ENCODE measurements at regions of chr11 and their contacts with region 1.

Region 1: DNA sequence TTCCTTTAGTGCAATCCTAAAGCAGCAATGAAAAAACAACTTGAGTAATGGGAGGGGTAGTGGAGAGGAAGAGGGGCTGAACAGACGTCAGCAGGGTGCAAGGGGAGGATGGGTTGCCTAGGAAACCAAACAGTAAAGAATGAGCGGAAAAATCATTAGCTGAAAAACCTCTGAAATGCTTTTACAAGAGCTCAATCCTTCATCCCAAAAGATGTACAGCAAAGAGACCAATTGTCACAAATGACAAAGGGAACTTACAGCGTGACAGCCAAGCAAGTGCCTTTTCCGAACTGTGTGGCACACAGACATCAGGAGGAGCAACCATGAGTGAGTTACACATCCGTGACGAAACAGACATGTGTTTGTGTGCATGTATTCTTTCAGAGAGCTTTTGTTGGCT is 104.6 kb downstream of the SIK3 start:
- DNase-seq: peak in 1 of 5 donors; percentile 40
- H3K4me3 ChIP-seq: no peak overlapping the region
- H3K27ac ChIP-seq: no peak overlapping the region
- H3K4me1 ChIP-seq: peaks cover 11% of the 10 kb centered on the region
- H3K27me3 ChIP-seq: no peaks in the 10 kb centered on the region
- CTCF ChIP-seq: no peak
- EP300 ChIP-seq: no peak
- POLR2A ChIP-seq: no peak

Region 2: GRCh38 chr11:116595305-116595880 is 398.2 kb before region 1 on chr11:
- intact Hi-C with region 1: no loop called
- DNase-seq: no peak
- H3K4me3 ChIP-seq: no peak overlapping the region
- H3K27ac ChIP-seq: no peak overlapping the region
- H3K4me1 ChIP-seq: peaks cover 9% of the 10 kb centered on the region
- H3K27me3 ChIP-seq: no peaks in the 10 kb centered on the region
- CTCF ChIP-seq: no peak
- EP300 ChIP-seq: no peak
- POLR2A ChIP-seq: no peak

Region 3: DNA sequence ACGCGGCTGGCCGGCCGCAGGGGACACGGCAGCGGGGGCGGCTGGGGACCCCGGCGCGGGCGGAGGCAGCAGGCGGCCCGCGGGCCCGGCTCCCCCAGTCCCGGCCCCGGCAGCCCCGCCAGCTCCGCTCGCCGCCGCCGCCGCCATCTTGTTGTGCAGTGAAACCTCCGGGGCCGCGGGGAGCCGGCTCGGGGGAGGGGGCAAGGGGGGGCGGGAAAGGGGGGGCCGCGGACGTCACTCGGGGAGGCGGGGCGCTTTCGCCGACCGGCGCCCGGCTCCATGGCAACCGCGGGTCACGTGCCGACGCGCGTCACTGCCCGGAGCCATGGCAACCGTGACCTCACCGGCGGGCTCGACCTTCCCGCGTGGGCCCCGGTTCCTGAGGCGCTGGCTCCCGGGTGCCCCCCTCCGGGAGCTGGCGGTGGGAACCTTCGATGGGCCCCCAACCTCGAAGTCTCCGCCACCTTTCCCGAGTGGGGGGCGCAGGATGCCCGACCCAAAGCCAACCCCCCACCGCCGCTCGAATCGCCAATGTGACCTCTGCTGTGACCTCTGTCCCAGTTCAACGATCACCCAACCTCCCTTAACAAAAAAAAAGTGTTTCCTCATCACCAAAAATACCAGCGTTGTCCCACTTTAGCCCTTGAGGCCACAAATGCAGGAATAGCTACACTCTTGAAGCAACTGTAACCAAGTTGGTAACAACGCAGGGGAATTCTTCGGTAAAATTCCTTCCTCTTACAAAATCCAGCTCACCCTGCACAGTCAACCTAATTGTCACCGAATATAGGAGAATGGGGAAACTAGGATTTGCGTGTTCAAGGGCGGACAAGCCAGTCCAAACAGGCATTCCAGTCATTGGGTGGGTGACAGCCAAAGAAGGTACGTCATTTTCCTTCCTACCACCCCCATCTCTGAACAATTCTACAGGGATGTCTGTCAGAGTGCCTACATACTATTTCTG is 105.0 kb after region 1 on chr11 and contains the start of gene SIK3:
- intact Hi-C with region 1: loop called in 1 of 4 experiments (anchors 10 kb)
- DNase-seq: peak; percentile 94 to 98 (median 97)
- H3K4me3 ChIP-seq: peak within 1 kb of the TSS; percentile 81
- H3K27ac ChIP-seq: peak within 1 kb of the TSS; percentile 88 to 98
- H3K4me1 ChIP-seq: peaks cover 17% of the 10 kb centered on the region
- H3K27me3 ChIP-seq: no peaks in the 10 kb centered on the region
- CTCF ChIP-seq: peak in 2 of 3 donors; percentile 58 to 69
- EP300 ChIP-seq: peak; percentile 86
- POLR2A ChIP-seq: peak; percentile 76
- total RNA-seq, gene SIK3: 33.3 to 134 (median 56.2) TPM

Region 4: GRCh38 chr11:117180661-117181585 is 187.3 kb after region 1 on chr11:
- intact Hi-C with region 1: no loop called
- DNase-seq: peak; percentile 72 to 84 (median 81)
- H3K4me3 ChIP-seq: no peak overlapping the region
- H3K27ac ChIP-seq: peak overlapping the region; percentile 17 to 38
- H3K4me1 ChIP-seq: peaks cover 12% of the 10 kb centered on the region
- H3K27me3 ChIP-seq: no peaks in the 10 kb centered on the region
- CTCF ChIP-seq: peak; percentile 26 to 76 (median 73)
- EP300 ChIP-seq: no peak
- POLR2A ChIP-seq: no peak

Region 5: DNA sequence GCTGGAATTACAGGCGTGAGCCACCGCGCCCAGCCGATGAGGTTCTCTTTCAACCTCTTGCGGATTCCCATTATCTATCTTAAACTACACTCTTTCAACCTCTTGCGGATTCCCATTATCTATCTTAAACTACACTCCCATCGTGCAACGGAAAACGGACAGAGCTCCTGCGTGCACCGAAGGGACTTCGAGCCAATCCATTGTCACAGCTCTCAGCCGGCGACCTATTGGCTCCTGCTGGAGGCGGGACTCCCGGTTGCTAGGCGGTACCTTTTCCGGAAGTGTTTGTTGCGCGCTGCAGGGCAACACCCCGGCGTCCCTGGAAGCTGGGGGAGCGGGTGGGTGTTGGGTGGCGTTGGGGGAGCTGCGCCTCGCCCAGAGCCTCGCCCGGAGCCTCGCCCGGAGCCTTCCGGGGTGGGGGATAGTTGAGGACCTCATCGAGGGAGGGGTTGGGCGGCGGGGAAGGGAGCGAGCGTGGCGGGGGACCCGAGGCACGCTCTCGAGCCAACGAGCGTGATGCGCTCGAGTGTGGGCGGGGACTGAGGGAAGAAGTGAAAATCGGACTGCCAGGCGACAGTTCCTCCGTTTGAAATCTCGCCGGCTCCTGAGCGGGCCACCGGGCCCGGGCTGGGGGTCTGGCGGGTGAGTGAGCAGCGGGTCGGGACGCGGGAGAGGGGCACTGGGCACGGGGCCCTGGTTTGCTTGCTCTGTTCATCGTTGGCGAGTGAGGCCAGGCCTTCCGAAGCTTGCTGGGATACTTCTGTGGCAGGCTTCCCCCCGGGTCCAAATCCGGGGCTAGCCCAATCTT is 334.2 kb after region 1 on chr11 and contains the start of gene CEP164:
- intact Hi-C with region 1: no loop called
- DNase-seq: peak; percentile 94 to 97 (median 94)
- H3K4me3 ChIP-seq: peak within 1 kb of the TSS; percentile 90
- H3K27ac ChIP-seq: peak within 1 kb of the TSS; percentile 79 to 82
- H3K4me1 ChIP-seq: peaks cover 4% of the 10 kb centered on the region
- H3K27me3 ChIP-seq: no peaks in the 10 kb centered on the region
- CTCF ChIP-seq: no peak
- EP300 ChIP-seq: no peak
- POLR2A ChIP-seq: peak; percentile 66
- total RNA-seq, gene CEP164: 21.0 to 50.4 (median 32.9) TPM

Measured in ovary (tissue), 10 donors.